Caco-2 (cell line): ENCODE measurements at regions of chr7 and their contacts with region 1.

Region 1: DNA sequence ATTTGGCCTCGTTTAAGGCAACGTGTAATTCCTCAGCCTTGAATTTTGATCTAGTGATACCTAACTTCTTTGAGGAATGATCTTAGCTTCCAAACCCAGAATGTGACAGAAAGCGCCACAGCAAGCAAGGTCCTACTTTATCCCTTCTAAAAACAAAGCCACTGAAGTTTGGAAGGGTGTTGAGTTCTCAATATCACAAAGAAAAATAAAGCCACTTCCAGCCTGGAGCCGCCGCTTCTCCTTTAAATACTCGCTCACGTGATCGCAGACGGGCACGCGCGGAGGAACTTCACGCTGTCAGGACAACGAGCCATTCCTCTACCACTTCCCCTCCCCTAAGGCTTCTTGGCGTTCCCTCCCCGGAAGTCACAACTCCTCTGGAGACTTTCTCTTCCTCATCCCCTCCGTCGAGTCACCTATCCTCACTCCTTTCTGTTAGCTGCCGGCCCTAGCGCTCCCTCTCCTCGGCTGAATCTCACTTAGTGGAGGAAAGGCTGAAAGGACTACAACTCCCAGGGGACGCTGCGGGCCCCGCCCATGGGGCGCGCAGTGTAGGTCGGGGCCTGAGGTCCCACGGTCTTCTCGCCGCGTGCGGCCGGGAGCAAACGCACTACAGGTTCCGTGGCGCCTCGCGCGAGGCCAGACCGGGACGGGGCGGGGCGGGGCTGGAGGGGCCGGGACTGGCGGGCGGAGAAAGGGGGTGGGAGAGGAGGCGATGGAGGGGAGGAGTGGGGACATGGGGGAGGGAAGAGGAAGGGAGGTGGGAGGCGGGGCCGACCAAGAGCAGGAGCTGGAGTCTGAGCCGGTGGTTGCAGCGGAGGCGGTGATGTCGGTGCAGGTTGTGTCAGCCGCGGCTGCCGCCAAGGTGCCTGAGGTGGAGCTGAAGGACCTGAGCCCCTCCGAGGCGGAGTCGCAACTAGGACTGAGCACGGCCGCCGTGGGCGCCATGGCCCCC is at the start of gene AHCYL2:
- DNase-seq: peak; percentile 97 to 98
- H3K4me3 ChIP-seq: peak within 1 kb of the TSS; percentile 81
- H3K4me3 Mint-ChIP-seq: peak within 1 kb of the TSS; percentile 87
- H3K27ac Mint-ChIP-seq: peak within 1 kb of the TSS; percentile 86
- H3K4me1 ChIP-seq: 0 out of 2 replicates have a peak, but pooled peaks cover 9% of the 10 kb centered on the region
- H3K4me1 Mint-ChIP-seq: peaks cover 10% of the 10 kb centered on the region
- H3K27me3 ChIP-seq: no peaks in the 10 kb centered on the region
- H3K27me3 Mint-ChIP-seq: no peaks in the 10 kb centered on the region
- CTCF ChIP-seq: no peak
- total RNA-seq, gene AHCYL2: 15.8 and 17.2 TPM in 2 replicates

Region 2: GRCh38 chr7:129271500-129272355 is 47.2 kb after region 1 on chr7:
- CTCF ChIA-PET with region 1: interaction called, 8 read pairs
- POLR2A ChIA-PET with region 1: no interaction called
- intact Hi-C with region 1: loop called (anchors 1 kb)
- DNase-seq: peak; percentile 58 to 78
- H3K4me3 ChIP-seq: no peak overlapping the region
- H3K4me3 Mint-ChIP-seq: no peak overlapping the region
- H3K27ac Mint-ChIP-seq: no peak overlapping the region
- H3K4me1 ChIP-seq: no peaks in the 10 kb centered on the region
- H3K4me1 Mint-ChIP-seq: no peaks in the 10 kb centered on the region
- H3K27me3 ChIP-seq: no peaks in the 10 kb centered on the region
- H3K27me3 Mint-ChIP-seq: no peaks in the 10 kb centered on the region
- CTCF ChIP-seq: peak; percentile 61 to 74

Region 3: GRCh38 chr7:129298268-129298893 is 73.9 kb after region 1 on chr7:
- CTCF ChIA-PET with region 1: no interaction called
- POLR2A ChIA-PET with region 1: no interaction called
- intact Hi-C with region 1: no loop called
- DNase-seq: peak in 1 of 2 experiments; percentile 38
- H3K4me3 ChIP-seq: no peak overlapping the region
- H3K4me3 Mint-ChIP-seq: no peak overlapping the region
- H3K27ac Mint-ChIP-seq: no peak overlapping the region
- H3K4me1 ChIP-seq: no peaks in the 10 kb centered on the region
- H3K4me1 Mint-ChIP-seq: no peaks in the 10 kb centered on the region
- H3K27me3 ChIP-seq: no peaks in the 10 kb centered on the region
- H3K27me3 Mint-ChIP-seq: no peaks in the 10 kb centered on the region
- CTCF ChIP-seq: peak; percentile 73 to 82

Region 4: GRCh38 chr7:129538790-129539189 is 314.3 kb after region 1 on chr7:
- CTCF ChIA-PET with region 1: interaction called, 10 read pairs
- POLR2A ChIA-PET with region 1: no interaction called
- intact Hi-C with region 1: no loop called
- DNase-seq: no peak
- H3K4me3 ChIP-seq: no peak overlapping the region
- H3K4me3 Mint-ChIP-seq: no peak overlapping the region
- H3K27ac Mint-ChIP-seq: no peak overlapping the region
- H3K4me1 ChIP-seq: no peaks in the 10 kb centered on the region
- H3K4me1 Mint-ChIP-seq: no peaks in the 10 kb centered on the region
- H3K27me3 ChIP-seq: no peaks in the 10 kb centered on the region
- H3K27me3 Mint-ChIP-seq: peaks cover 2% of the 10 kb centered on the region
- CTCF ChIP-seq: no peak